GM12878 (cell line): ENCODE measurements at regions of chr6 and their contacts with region 1.

Region 1: DNA sequence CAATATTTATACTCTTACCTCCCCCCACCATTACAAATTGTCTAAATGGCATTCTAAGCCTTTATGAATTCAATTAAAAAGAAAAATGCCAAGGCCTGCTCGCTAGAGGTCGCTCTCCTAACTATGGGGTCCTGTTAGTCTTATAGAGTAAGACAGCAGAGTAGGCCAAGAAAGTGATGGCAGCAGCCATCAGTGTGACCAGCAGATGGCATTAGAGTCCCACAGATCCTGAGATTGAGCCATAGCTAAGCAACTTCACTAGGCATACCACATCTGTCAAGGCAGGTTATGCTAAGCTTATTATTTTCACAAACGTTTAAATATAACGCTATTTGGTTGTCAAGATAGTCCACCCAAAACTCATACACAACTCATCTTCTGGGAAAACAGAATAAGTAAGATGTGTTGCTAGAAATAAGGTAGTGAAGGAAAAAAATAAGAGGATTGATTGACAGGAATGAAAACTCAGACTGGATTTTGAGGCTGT is 57.6 kb upstream of the SCAF8 start:
- DNase-seq: peak; percentile 97
- ATAC-seq: peak; percentile 100
- H3K4me3 ChIP-seq: no peak overlapping the region
- H3K27ac ChIP-seq: no peak overlapping the region
- H3K4me1 ChIP-seq: no peaks in the 10 kb centered on the region
- H3K27me3 ChIP-seq: no peaks in the 10 kb centered on the region
- CTCF ChIP-seq: peak; percentile 98 to 100 (median 100); a peak in 5 of 6 replicates
- EP300 ChIP-seq: no peak
- POLR2A ChIP-seq: no peak
- RAD21 ChIP-seq: peak; percentile 97

Region 2: DNA sequence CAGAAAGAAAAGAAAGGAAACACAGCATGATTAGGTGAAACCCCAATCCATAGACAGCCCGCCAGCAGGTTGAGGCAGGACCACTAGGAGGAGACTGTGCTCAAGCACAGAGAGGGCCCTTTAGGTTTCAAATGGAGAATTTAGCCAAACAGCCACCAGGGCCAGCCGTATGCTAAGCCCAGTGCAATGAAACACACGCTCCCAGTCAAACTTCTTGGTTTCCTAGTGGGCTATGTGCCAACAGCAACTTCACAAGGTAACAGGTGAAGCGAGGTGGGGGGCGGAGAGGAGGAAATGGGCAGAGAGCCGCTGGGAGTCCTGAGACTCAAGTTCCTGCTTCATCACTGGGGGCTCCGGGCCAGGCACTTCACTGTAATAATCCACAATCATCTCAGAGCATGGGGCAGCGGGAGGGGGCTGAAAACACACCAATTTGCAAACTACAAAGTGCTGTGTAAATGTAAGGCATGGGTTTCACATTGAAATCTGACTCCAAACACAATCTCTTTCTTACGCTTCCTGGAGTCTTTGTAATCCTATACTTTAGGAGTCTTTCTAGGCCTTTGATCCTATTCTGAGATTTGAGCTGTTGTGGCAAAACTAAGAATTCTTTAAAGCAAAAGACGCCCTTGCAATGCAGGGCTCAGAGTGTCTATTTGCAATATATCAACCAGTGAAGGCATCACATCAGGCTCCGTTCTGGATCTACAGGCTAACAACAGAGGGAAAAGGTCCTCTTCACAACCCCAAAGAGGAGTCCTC is 519.3 kb before region 1 on chr6:
- CTCF ChIA-PET with region 1: interaction called, 6 read pairs
- POLR2A ChIA-PET with region 1: no interaction called
- RAD21 ChIA-PET with region 1: interaction called, 4 read pairs
- SMC1A ChIA-PET with region 1: interaction called, 3 read pairs
- in situ Hi-C with region 1: no loop called
- intact Hi-C with region 1: loop called (anchors 5 kb)
- DNase-seq: no peak
- ATAC-seq: peak; percentile 79
- H3K4me3 ChIP-seq: peak overlapping the region; percentile 35; the same call in 1 of the 2 replicates
- H3K27ac ChIP-seq: peak overlapping the region; percentile 64
- H3K4me1 ChIP-seq: peaks cover 16% of the 10 kb centered on the region
- H3K27me3 ChIP-seq: no peaks in the 10 kb centered on the region; a peak in 1 of 4 replicates
- CTCF ChIP-seq: peak; percentile 55 to 73 (median 64)
- EP300 ChIP-seq: no peak
- POLR2A ChIP-seq: no peak
- RAD21 ChIP-seq: peak; percentile 71

Region 3: GRCh38 chr6:154430481-154430919 is 245.1 kb before region 1 on chr6:
- CTCF ChIA-PET with region 1: no interaction called
- POLR2A ChIA-PET with region 1: no interaction called
- RAD21 ChIA-PET with region 1: no interaction called
- SMC1A ChIA-PET with region 1: no interaction called
- in situ Hi-C with region 1: no loop called
- intact Hi-C with region 1: no loop called
- DNase-seq: no peak
- ATAC-seq: no peak
- H3K4me3 ChIP-seq: no peak overlapping the region
- H3K27ac ChIP-seq: no peak overlapping the region
- H3K4me1 ChIP-seq: no peaks in the 10 kb centered on the region
- H3K27me3 ChIP-seq: peaks cover 0 to under 1% of the 10 kb centered on the region in 2 experiments; a peak in 1 of 4 replicates
- CTCF ChIP-seq: no peak
- EP300 ChIP-seq: no peak
- POLR2A ChIP-seq: no peak
- RAD21 ChIP-seq: no peak

Region 4: GRCh38 chr6:154448448-154449096 is 227.1 kb before region 1 on chr6:
- CTCF ChIA-PET with region 1: no interaction called
- POLR2A ChIA-PET with region 1: no interaction called
- RAD21 ChIA-PET with region 1: no interaction called
- SMC1A ChIA-PET with region 1: no interaction called
- in situ Hi-C with region 1: no loop called
- intact Hi-C with region 1: no loop called
- DNase-seq: no peak
- ATAC-seq: no peak
- H3K4me3 ChIP-seq: no peak overlapping the region
- H3K27ac ChIP-seq: no peak overlapping the region
- H3K4me1 ChIP-seq: no peaks in the 10 kb centered on the region
- H3K27me3 ChIP-seq: no peaks in the 10 kb centered on the region
- CTCF ChIP-seq: no peak
- EP300 ChIP-seq: no peak
- POLR2A ChIP-seq: no peak
- RAD21 ChIP-seq: no peak

Region 5: GRCh38 chr6:154569156-154569862 is 106.3 kb before region 1 on chr6:
- CTCF ChIA-PET with region 1: no interaction called
- POLR2A ChIA-PET with region 1: no interaction called
- RAD21 ChIA-PET with region 1: no interaction called
- SMC1A ChIA-PET with region 1: no interaction called
- in situ Hi-C with region 1: no loop called
- intact Hi-C with region 1: no loop called
- DNase-seq: no peak
- ATAC-seq: no peak
- H3K4me3 ChIP-seq: no peak overlapping the region
- H3K27ac ChIP-seq: no peak overlapping the region
- H3K4me1 ChIP-seq: no peaks in the 10 kb centered on the region
- H3K27me3 ChIP-seq: no peaks in the 10 kb centered on the region; a peak in 1 of 4 replicates
- CTCF ChIP-seq: no peak
- EP300 ChIP-seq: no peak
- POLR2A ChIP-seq: no peak
- RAD21 ChIP-seq: no peak

Region 6: GRCh38 chr6:154733012-154733625 is 57.5 kb after region 1 on chr6 and contains the start of gene SCAF8:
- CTCF ChIA-PET with region 1: interaction called, 9 read pairs
- POLR2A ChIA-PET with region 1: no interaction called
- RAD21 ChIA-PET with region 1: interaction called, 6 read pairs
- SMC1A ChIA-PET with region 1: interaction called, 3 read pairs
- in situ Hi-C with region 1: no loop called
- intact Hi-C with region 1: loop called (anchors 5 kb)
- DNase-seq: peak; percentile 23
- ATAC-seq: peak; percentile 87
- H3K4me3 ChIP-seq: peak within 1 kb of the TSS; percentile 88
- H3K27ac ChIP-seq: peak within 1 kb of the TSS; percentile 96
- H3K4me1 ChIP-seq: peaks cover 5% of the 10 kb centered on the region; the same call in 1 of the 2 replicates
- H3K27me3 ChIP-seq: no peaks in the 10 kb centered on the region
- CTCF ChIP-seq: peak; percentile 73 to 91 (median 73); a peak in 5 of 6 replicates
- EP300 ChIP-seq: peak in 1 of 2 experiments; percentile 45; a peak in 1 of 4 replicates
- POLR2A ChIP-seq: peak; percentile 93
- RAD21 ChIP-seq: peak; percentile 50
- polyA plus RNA-seq, gene SCAF8: 8.1 to 8.5 TPM

Region 7: DNA sequence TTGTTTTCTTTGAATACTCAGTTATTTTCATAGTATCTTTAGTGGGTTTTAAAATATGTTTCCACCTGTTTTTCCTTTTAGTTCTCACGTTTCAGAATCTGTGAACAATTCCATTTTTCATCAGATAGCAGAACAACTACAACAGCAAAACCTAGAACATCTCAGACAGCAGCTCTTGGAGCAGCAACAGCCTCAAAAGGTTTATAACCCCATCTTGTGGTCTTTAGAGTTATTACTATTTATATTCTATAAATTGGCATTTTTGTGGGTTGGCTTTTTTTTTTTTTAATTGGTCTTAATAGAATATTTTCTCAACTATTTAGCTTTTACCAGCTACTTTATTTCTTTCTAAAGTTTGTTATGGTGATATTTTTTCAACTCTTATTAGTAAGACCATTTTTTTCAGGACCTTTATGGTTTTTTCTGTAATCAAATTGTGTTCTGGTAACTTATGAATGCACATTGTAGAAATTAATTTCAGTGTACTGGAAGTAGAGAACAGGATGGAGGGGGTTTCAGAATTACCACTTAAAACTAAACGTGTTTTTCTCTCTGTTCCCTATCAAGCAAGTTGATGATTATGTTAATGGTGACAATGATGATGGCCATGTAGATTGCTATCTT is 129.8 kb after region 1 on chr6:
- CTCF ChIA-PET with region 1: interaction called, 155 read pairs
- POLR2A ChIA-PET with region 1: interaction called, 4 read pairs
- RAD21 ChIA-PET with region 1: interaction called, 60 read pairs
- SMC1A ChIA-PET with region 1: interaction called, 73 read pairs
- in situ Hi-C with region 1: loop called (anchors 5 kb)
- intact Hi-C with region 1: loop called (anchors 1 kb)
- DNase-seq: no peak
- ATAC-seq: peak; percentile 62
- H3K4me3 ChIP-seq: no peak overlapping the region
- H3K27ac ChIP-seq: no peak overlapping the region
- H3K4me1 ChIP-seq: no peaks in the 10 kb centered on the region
- H3K27me3 ChIP-seq: no peaks in the 10 kb centered on the region
- CTCF ChIP-seq: peak; percentile 31 to 58 (median 41); a peak in 4 of 6 replicates
- EP300 ChIP-seq: no peak
- POLR2A ChIP-seq: no peak
- RAD21 ChIP-seq: peak; percentile 90

Region 8: DNA sequence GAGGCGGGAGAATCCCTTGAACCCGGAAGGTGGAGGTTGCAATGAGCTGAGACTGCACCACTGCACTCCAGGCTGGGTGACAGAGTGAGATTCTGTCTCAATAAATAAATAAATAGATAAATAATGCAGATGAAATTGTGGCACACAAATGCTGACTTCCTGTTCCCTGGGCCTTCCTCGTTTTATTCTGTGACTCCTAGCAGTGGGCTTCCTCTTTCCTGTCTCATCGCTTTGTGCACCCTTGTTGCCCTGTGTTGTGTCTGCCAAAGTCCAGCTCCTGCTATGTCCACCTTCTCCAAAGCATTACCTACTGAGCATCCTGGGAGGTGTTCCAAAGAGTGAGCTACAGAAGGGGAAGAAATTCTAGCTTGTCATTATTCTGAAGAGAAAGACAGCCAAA is 219.3 kb after region 1 on chr6:
- CTCF ChIA-PET with region 1: interaction called, 11 read pairs
- POLR2A ChIA-PET with region 1: no interaction called
- RAD21 ChIA-PET with region 1: no interaction called
- SMC1A ChIA-PET with region 1: no interaction called
- in situ Hi-C with region 1: no loop called
- intact Hi-C with region 1: no loop called
- DNase-seq: no peak
- ATAC-seq: no peak
- H3K4me3 ChIP-seq: no peak overlapping the region
- H3K27ac ChIP-seq: no peak overlapping the region
- H3K4me1 ChIP-seq: no peaks in the 10 kb centered on the region
- H3K27me3 ChIP-seq: no peaks in the 10 kb centered on the region
- CTCF ChIP-seq: no peak
- EP300 ChIP-seq: no peak
- POLR2A ChIP-seq: no peak
- RAD21 ChIP-seq: no peak

Region 9: GRCh38 chr6:154928325-154928922 is 252.8 kb after region 1 on chr6:
- CTCF ChIA-PET with region 1: interaction called, 66 read pairs
- POLR2A ChIA-PET with region 1: interaction called, 3 read pairs
- RAD21 ChIA-PET with region 1: interaction called, 45 read pairs
- SMC1A ChIA-PET with region 1: interaction called, 25 read pairs
- in situ Hi-C with region 1: loop called (anchors 5 kb)
- intact Hi-C with region 1: loop called (anchors 1 kb)
- DNase-seq: peak; percentile 12
- ATAC-seq: peak; percentile 94
- H3K4me3 ChIP-seq: no peak overlapping the region
- H3K27ac ChIP-seq: no peak overlapping the region
- H3K4me1 ChIP-seq: 0 out of 2 replicates have a peak, but pooled peaks cover 2% of the 10 kb centered on the region
- H3K27me3 ChIP-seq: no peaks in the 10 kb centered on the region
- CTCF ChIP-seq: peak; percentile 72 to 90 (median 76)
- EP300 ChIP-seq: no peak
- POLR2A ChIP-seq: no peak
- RAD21 ChIP-seq: peak; percentile 98